GM12878 (cell line): ENCODE measurements at regions of chr1 and their contacts with region 1.

Region 1: DNA sequence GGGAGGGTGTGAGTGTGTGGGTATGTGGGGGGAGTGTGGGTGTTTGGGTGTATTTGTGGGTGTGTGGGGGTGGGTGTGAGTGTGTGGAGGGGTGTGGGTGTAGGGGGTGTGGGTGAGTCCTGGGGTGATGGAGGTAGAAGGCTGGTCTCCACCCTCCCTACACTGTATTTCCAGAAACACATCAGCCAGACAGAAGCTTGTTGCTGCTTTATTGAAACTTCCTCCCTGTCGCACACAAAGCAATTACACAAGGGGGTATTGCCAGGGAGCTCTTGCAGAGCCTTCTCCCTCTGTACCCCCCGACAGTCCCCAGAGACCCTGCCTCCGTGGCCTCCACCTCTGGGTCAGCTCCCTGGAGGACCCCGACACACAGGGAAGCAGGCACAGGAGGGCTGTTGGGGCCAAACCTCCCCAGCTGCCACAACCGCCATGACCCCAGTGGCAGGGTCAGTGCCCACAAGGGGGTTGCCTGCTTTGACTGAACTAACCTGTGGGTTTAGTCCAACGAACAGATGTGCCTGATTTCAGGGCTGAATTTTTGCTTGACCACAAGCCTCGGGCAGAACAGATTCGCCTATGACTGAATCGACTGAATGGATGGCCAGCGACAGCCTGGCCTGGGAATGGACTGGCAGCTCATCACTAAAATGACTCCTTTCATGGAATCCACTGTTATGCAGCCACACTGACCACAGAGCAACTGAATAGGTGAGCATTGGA is 9.1 kb upstream of the MATN1 start:
- DNase-seq: no peak
- ATAC-seq: peak; percentile 63
- H3K4me3 ChIP-seq: no peak overlapping the region
- H3K27ac ChIP-seq: no peak overlapping the region
- H3K4me1 ChIP-seq: peaks cover 23% of the 10 kb centered on the region
- H3K27me3 ChIP-seq: no peaks in the 10 kb centered on the region
- CTCF ChIP-seq: no peak
- EP300 ChIP-seq: no peak
- POLR2A ChIP-seq: peak; percentile 62; the same call in 1 of the 2 replicates
- RAD21 ChIP-seq: no peak

Region 2: GRCh38 chr1:30511991-30512913 is 220.2 kb before region 1 on chr1:
- CTCF ChIA-PET with region 1: no interaction called
- POLR2A ChIA-PET with region 1: no interaction called
- RAD21 ChIA-PET with region 1: no interaction called
- SMC1A ChIA-PET with region 1: no interaction called
- in situ Hi-C with region 1: no loop called
- intact Hi-C with region 1: no loop called
- DNase-seq: no peak
- ATAC-seq: no peak
- H3K4me3 ChIP-seq: no peak overlapping the region
- H3K27ac ChIP-seq: no peak overlapping the region
- H3K4me1 ChIP-seq: no peaks in the 10 kb centered on the region
- H3K27me3 ChIP-seq: no peaks in the 10 kb centered on the region; a peak in 2 of 4 replicates
- CTCF ChIP-seq: no peak
- EP300 ChIP-seq: no peak
- POLR2A ChIP-seq: no peak
- RAD21 ChIP-seq: no peak

Region 3: DNA sequence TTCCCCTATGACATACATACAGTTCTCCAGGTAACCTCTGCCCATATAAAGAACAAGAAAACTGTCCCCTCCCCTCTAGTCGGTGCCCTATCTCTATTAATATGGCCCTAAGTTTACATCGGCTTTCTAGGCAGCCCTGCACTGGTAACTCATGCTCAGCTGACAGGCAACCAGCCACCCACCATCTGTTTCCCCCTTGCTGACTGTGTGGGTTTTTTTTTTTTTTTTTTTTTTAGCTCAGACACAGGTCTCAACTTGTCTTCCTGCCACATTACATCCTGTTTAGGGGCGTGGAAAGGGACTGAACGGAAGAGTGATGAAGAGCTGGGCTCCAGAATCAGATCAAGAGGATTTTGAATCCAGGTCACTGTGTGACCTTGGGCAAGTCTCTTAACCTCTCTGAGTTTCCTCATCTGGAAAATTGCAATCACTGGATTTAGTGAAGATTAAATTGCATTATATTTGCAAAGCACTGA is 11.2 kb after region 1 on chr1:
- CTCF ChIA-PET with region 1: interaction called, 43 read pairs
- POLR2A ChIA-PET with region 1: interaction called, 45 read pairs
- RAD21 ChIA-PET with region 1: interaction called, 23 read pairs
- SMC1A ChIA-PET with region 1: interaction called, 556 read pairs
- in situ Hi-C with region 1: no loop called
- intact Hi-C with region 1: no loop called
- DNase-seq: peak; percentile 82
- ATAC-seq: peak; percentile 44
- H3K4me3 ChIP-seq: peak overlapping the region; percentile 98
- H3K27ac ChIP-seq: peak overlapping the region; percentile 93
- H3K4me1 ChIP-seq: peaks cover 91% of the 10 kb centered on the region
- H3K27me3 ChIP-seq: no peaks in the 10 kb centered on the region
- CTCF ChIP-seq: no peak; a peak in 1 of 6 replicates
- EP300 ChIP-seq: peak in 1 of 2 experiments; percentile 71; a peak in 2 of 4 replicates
- POLR2A ChIP-seq: no peak; the same call in 1 of the 2 replicates
- RAD21 ChIP-seq: no peak

Region 4: GRCh38 chr1:30748699-30749401 is 16.4 kb after region 1 on chr1:
- CTCF ChIA-PET with region 1: interaction called, 43 read pairs
- POLR2A ChIA-PET with region 1: interaction called, 741 read pairs
- RAD21 ChIA-PET with region 1: interaction called, 23 read pairs
- SMC1A ChIA-PET with region 1: interaction called, 556 read pairs
- in situ Hi-C with region 1: no loop called
- intact Hi-C with region 1: no loop called
- DNase-seq: no peak
- ATAC-seq: peak; percentile 1; the same call in 2 of the 3 replicates
- H3K4me3 ChIP-seq: peak overlapping the region; percentile 98
- H3K27ac ChIP-seq: peak overlapping the region; percentile 93
- H3K4me1 ChIP-seq: peaks cover 87% of the 10 kb centered on the region
- H3K27me3 ChIP-seq: no peaks in the 10 kb centered on the region
- CTCF ChIP-seq: no peak
- EP300 ChIP-seq: no peak
- POLR2A ChIP-seq: no peak; the same call in 1 of the 2 replicates
- RAD21 ChIP-seq: no peak

Region 5: DNA sequence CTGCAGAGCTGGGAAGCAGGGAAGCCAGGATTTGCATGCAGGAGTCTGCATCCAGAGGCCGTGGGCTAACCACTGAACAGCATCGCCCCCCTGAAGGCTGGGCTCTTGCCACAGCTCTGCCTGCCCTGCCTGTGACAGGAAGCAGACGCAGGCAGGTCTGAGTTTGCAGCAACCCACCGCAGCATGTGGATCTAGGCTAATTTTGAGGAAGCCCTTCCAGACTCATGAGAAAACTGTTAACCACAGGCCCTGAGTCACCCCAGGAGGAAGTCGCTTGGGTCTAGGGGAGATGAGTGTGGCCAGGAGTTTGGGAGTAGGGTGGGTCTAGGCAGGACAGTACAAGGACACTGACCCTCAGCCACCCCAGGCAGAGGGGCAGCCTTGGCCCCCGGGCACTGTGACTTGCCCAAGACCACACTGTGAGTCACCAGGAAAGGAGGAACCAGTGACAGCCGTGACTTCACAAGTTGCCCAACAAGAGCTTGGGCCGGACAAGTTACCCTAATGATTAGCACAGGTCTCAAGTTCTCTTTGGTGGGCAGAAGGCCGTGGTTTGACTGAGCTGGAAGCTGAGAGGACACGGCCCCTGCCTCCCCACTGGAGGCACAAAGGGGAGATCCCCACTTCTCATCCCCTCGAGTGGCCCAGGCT is 24.2 kb after region 1 on chr1:
- CTCF ChIA-PET with region 1: interaction called, 7 read pairs
- POLR2A ChIA-PET with region 1: interaction called, 741 read pairs
- RAD21 ChIA-PET with region 1: interaction called, 54 read pairs
- SMC1A ChIA-PET with region 1: interaction called, 556 read pairs
- in situ Hi-C with region 1: no loop called
- intact Hi-C with region 1: no loop called
- DNase-seq: no peak
- ATAC-seq: peak; percentile 16
- H3K4me3 ChIP-seq: peak overlapping the region; percentile 98
- H3K27ac ChIP-seq: peak overlapping the region; percentile 93
- H3K4me1 ChIP-seq: peaks cover 48% of the 10 kb centered on the region
- H3K27me3 ChIP-seq: no peaks in the 10 kb centered on the region
- CTCF ChIP-seq: no peak
- EP300 ChIP-seq: peak in 1 of 2 experiments; percentile 59; a peak in 1 of 4 replicates
- POLR2A ChIP-seq: no peak; the same call in 1 of the 2 replicates
- RAD21 ChIP-seq: no peak

Region 6: DNA sequence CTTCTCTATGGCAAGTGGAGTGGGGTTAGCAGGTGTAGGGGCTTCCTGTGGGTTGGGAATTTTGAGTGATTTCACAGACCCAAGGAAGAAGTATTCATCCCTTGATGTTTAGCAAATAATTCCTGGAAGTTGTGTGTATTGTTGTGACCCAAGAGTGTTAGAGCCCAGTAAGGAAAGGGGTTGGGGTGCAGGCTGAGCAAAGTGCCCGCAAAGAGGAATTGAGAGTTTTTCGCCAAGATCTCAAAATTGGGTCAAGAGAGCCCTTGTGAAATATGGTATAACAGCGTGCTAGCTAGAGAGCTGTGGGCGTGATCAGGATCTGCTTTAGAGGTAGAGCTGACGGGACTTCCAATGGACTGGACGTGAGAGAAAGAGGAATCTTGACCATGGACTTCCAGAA is 98.1 kb after region 1 on chr1:
- CTCF ChIA-PET with region 1: no interaction called
- POLR2A ChIA-PET with region 1: no interaction called
- RAD21 ChIA-PET with region 1: no interaction called
- SMC1A ChIA-PET with region 1: no interaction called
- in situ Hi-C with region 1: no loop called
- intact Hi-C with region 1: no loop called
- DNase-seq: no peak
- ATAC-seq: no peak
- H3K4me3 ChIP-seq: no peak overlapping the region
- H3K27ac ChIP-seq: no peak overlapping the region
- H3K4me1 ChIP-seq: no peaks in the 10 kb centered on the region
- H3K27me3 ChIP-seq: no peaks in the 10 kb centered on the region
- CTCF ChIP-seq: no peak
- EP300 ChIP-seq: no peak
- POLR2A ChIP-seq: no peak
- RAD21 ChIP-seq: no peak